ENCODE measurements at regions of chr6 and their contacts with region 1.

Region 1: DNA sequence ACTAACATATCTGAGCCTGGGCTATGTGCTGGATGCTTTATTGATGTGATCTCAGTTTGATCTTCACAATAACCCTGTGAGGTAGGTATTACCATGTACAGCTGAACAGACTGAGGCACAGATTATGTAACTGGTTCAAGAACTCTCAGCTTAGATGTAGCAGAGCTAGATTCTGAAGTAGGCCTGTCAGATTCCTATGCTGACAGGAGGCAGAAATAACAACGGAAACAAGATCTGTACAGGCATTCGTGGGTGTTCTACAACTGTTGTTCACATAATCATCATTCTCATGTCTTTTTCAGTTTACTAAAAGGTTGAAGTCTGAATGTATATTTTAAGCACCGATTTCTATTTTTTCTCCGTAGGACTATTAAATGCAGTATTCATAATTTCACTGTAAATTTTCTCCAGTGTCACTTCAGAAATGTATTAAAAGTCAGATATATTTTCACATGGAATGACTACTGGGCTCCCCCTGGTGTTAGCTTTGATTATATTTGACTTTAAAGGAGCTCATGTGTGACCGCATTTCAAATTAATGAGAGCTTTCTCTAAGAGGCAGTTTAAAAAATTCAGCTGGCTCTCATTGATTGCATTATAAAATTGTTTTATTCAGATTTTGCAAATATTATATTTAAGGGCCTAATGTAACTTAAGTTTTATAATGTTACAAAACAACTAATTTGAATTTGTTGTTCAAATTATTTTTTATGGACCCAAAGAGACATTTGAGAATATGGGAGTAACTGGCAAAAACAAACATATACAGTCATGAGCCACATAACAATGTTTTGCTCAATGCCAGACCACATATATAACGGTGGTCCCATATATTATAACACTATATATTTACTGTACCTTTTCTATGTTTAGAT is 36.4 kb upstream of the SLC17A4 start:
- DNase-seq: peak in 1 of 2 experiments; percentile 47
- H3K4me3 ChIP-seq: no peak overlapping the region
- H3K4me3 Mint-ChIP-seq: no peak overlapping the region
- H3K27ac Mint-ChIP-seq: no peak overlapping the region
- H3K4me1 ChIP-seq: no peaks in the 10 kb centered on the region
- H3K4me1 Mint-ChIP-seq: no peaks in the 10 kb centered on the region
- H3K27me3 ChIP-seq: no peaks in the 10 kb centered on the region
- H3K27me3 Mint-ChIP-seq: no peaks in the 10 kb centered on the region
- CTCF ChIP-seq: peak; percentile 50 to 58

Region 2: DNA sequence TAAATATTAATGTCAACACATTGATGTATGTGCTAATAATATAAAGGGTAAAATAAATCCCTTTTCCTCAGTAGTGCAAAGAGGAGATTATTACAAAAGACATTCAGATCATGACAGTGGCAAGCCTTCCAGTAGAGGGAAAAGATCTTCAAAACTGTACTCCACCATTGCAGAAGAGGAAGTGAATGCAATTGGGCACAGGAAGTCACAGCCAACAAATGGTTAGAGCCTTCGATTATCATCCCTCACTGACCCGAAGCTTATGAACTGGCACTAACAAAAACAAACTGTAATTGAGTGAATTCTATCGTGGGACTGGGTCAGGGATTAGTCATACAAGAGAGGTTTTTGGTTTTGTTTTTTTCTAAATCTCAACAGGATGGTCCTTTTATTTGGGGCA is 105.4 kb before region 1 on chr6:
- CTCF ChIA-PET with region 1: interaction called, 5 read pairs
- POLR2A ChIA-PET with region 1: no interaction called
- intact Hi-C with region 1: loop called (anchors 5 kb)
- DNase-seq: no peak
- H3K4me3 ChIP-seq: no peak overlapping the region
- H3K4me3 Mint-ChIP-seq: no peak overlapping the region
- H3K27ac Mint-ChIP-seq: no peak overlapping the region
- H3K4me1 ChIP-seq: no peaks in the 10 kb centered on the region
- H3K4me1 Mint-ChIP-seq: no peaks in the 10 kb centered on the region
- H3K27me3 ChIP-seq: no peaks in the 10 kb centered on the region
- H3K27me3 Mint-ChIP-seq: no peaks in the 10 kb centered on the region
- CTCF ChIP-seq: no peak

Region 3: GRCh38 chr6:25641940-25642666 is 76.0 kb before region 1 on chr6:
- CTCF ChIA-PET with region 1: interaction called, 8 read pairs
- POLR2A ChIA-PET with region 1: no interaction called
- intact Hi-C with region 1: loop called (anchors 1 kb)
- DNase-seq: peak in 1 of 2 experiments; percentile 38
- H3K4me3 ChIP-seq: no peak overlapping the region
- H3K4me3 Mint-ChIP-seq: peak overlapping the region; percentile 62
- H3K27ac Mint-ChIP-seq: peak overlapping the region; percentile 91
- H3K4me1 ChIP-seq: peaks cover 50% of the 10 kb centered on the region
- H3K4me1 Mint-ChIP-seq: peaks cover 52% of the 10 kb centered on the region
- H3K27me3 ChIP-seq: no peaks in the 10 kb centered on the region
- H3K27me3 Mint-ChIP-seq: no peaks in the 10 kb centered on the region
- CTCF ChIP-seq: no peak

Region 4: GRCh38 chr6:25889877-25890853 is 172.1 kb after region 1 on chr6:
- CTCF ChIA-PET with region 1: interaction called, 9 read pairs
- POLR2A ChIA-PET with region 1: no interaction called
- intact Hi-C with region 1: loop called (anchors 1 kb)
- DNase-seq: peak; percentile 39 to 67
- H3K4me3 ChIP-seq: no peak overlapping the region
- H3K4me3 Mint-ChIP-seq: no peak overlapping the region
- H3K27ac Mint-ChIP-seq: no peak overlapping the region
- H3K4me1 ChIP-seq: no peaks in the 10 kb centered on the region
- H3K4me1 Mint-ChIP-seq: no peaks in the 10 kb centered on the region
- H3K27me3 ChIP-seq: no peaks in the 10 kb centered on the region
- H3K27me3 Mint-ChIP-seq: no peaks in the 10 kb centered on the region
- CTCF ChIP-seq: peak; percentile 31 to 50

Region 5: GRCh38 chr6:25942561-25943147 is 224.6 kb after region 1 on chr6:
- CTCF ChIA-PET with region 1: interaction called, 3 read pairs
- POLR2A ChIA-PET with region 1: no interaction called
- intact Hi-C with region 1: loop called (anchors 1 kb)
- DNase-seq: peak in 1 of 2 experiments; percentile 37
- H3K4me3 ChIP-seq: no peak overlapping the region
- H3K4me3 Mint-ChIP-seq: no peak overlapping the region
- H3K27ac Mint-ChIP-seq: no peak overlapping the region
- H3K4me1 ChIP-seq: peaks cover 11% of the 10 kb centered on the region; the same call in 1 of the 2 replicates
- H3K4me1 Mint-ChIP-seq: peaks cover 11% of the 10 kb centered on the region
- H3K27me3 ChIP-seq: no peaks in the 10 kb centered on the region
- H3K27me3 Mint-ChIP-seq: no peaks in the 10 kb centered on the region
- CTCF ChIP-seq: peak; percentile 47 to 65

Region 6: GRCh38 chr6:26003102-26003694 is 285.1 kb after region 1 on chr6:
- CTCF ChIA-PET with region 1: no interaction called
- POLR2A ChIA-PET with region 1: no interaction called
- intact Hi-C with region 1: loop called (anchors 5 kb)
- DNase-seq: peak; percentile 49 to 79
- H3K4me3 ChIP-seq: no peak overlapping the region
- H3K4me3 Mint-ChIP-seq: no peak overlapping the region
- H3K27ac Mint-ChIP-seq: no peak overlapping the region
- H3K4me1 ChIP-seq: no peaks in the 10 kb centered on the region
- H3K4me1 Mint-ChIP-seq: peaks cover 13% of the 10 kb centered on the region
- H3K27me3 ChIP-seq: no peaks in the 10 kb centered on the region
- H3K27me3 Mint-ChIP-seq: no peaks in the 10 kb centered on the region
- CTCF ChIP-seq: peak; percentile 77 to 90